Activated CD8-positive, alpha-beta memory T cell treated with anti-CD3 and anti-CD28 coated beads, Interleukin-2, amount 10 ng/mL, durations not matched to agents 7 days and 5 days (primary cell): ENCODE measurements at regions of chr9 and their contacts with region 1.

Region 1: GRCh38 chr9:137423004-137423874 is at the starts of genes EXD3 and NOXA1:
- DNase-seq: peak; percentile 96
- ATAC-seq: peak; percentile 96
- H3K4me3 Mint-ChIP-seq: peak within 1 kb of the TSS; percentile 87
- H3K27ac Mint-ChIP-seq: peak within 1 kb of the TSS; percentile 73
- H3K4me1 Mint-ChIP-seq: peaks cover 13% of the 10 kb centered on the region
- H3K27me3 Mint-ChIP-seq: peaks cover 11% of the 10 kb centered on the region
- total RNA-seq, gene EXD3: 9.2 to 19.8 TPM
- total RNA-seq, gene NOXA1: 0.30 to 0.53 TPM

Region 2: DNA sequence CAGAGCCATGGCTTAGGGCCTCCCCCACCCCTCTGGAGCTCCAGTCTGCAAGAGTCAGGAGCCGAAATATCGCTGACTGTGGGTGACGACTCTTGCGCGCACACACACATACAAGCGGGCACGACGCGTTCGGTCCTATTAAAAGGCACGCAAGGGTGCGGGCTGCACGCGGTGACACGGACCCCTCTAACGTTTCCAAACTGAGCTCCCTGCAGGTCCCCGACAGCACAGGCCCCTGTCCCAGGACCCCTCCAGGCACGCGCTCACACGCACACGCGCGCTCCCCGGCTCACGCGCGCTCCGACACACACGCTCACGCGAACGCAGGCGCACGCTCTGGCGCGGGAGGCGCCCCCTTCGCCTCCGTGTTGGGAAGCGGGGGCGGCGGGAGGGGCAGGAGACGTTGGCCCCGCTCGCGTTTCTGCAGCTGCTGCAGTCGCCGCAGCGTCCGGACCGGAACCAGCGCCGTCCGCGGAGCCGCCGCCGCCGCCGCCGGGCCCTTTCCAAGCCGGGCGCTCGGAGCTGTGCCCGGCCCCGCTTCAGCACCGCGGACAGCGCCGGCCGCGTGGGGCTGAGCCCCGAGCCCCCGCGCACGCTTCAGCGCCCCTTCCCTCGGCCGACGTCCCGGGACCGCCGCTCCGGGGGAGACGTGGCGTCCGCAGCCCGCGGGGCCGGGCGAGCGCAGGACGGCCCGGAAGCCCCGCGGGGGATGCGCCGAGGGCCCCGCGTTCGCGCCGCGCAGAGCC is 284.3 kb before region 1 on chr9 and contains the start of gene GRIN1:
- CTCF ChIA-PET with region 1: no interaction called
- DNase-seq: no peak
- ATAC-seq: peak; percentile 73
- H3K4me3 Mint-ChIP-seq: no peak within 1 kb of the TSS
- H3K27ac Mint-ChIP-seq: no peak within 1 kb of the TSS
- H3K4me1 Mint-ChIP-seq: peaks cover 4% of the 10 kb centered on the region
- H3K27me3 Mint-ChIP-seq: peaks cover 63% of the 10 kb centered on the region
- total RNA-seq, gene GRIN1: not detected

Region 3: DNA sequence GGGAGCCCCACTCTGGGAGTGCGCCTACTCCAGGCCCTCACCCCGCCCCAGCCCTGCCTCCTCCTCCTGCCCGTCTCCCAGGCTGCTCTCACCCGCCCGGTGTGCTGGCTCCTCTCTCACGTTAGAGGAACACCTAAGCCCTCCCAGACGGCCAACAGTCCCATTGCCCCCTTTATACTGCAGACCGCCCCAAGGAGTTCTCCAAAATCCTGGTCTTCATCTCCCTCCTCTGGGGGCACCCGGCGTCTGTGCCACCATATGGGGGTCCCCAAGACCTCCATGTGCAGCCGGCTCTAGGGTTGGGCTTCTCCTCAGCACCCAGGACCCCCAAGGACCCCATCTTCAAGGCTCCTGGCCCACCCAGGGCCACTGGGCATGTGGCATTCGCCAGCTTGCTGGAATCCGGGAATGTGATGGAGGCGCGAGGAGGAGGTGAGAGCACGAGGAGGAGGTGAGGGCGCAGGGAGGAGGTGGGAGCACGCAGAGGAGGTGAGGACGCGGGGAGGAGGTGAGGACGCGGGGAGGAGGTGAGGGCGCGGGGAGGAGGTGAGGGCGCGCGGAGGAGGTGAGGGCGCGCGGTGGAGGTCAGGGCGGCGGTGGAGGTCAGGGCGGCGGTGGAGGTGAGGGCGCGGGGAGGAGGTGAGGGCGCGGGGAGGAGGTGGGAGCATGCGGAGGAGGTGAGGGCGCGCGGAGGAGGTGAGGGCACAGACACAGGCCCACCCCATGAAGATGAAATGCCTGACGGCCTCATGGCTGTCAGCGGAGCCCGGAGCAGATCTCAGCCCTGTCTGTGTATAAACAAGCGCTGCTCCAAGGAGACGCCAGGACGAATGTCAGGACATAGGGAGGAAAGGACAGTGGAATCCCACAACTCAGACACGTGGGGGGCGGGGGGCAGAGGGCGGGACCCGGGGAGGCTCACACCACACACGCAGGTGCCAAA is 41.5 kb before region 1 on chr9:
- CTCF ChIA-PET with region 1: no interaction called
- DNase-seq: no peak
- ATAC-seq: no peak
- H3K4me3 Mint-ChIP-seq: no peak overlapping the region
- H3K27ac Mint-ChIP-seq: no peak overlapping the region
- H3K4me1 Mint-ChIP-seq: no peaks in the 10 kb centered on the region
- H3K27me3 Mint-ChIP-seq: no peaks in the 10 kb centered on the region

Region 4: DNA sequence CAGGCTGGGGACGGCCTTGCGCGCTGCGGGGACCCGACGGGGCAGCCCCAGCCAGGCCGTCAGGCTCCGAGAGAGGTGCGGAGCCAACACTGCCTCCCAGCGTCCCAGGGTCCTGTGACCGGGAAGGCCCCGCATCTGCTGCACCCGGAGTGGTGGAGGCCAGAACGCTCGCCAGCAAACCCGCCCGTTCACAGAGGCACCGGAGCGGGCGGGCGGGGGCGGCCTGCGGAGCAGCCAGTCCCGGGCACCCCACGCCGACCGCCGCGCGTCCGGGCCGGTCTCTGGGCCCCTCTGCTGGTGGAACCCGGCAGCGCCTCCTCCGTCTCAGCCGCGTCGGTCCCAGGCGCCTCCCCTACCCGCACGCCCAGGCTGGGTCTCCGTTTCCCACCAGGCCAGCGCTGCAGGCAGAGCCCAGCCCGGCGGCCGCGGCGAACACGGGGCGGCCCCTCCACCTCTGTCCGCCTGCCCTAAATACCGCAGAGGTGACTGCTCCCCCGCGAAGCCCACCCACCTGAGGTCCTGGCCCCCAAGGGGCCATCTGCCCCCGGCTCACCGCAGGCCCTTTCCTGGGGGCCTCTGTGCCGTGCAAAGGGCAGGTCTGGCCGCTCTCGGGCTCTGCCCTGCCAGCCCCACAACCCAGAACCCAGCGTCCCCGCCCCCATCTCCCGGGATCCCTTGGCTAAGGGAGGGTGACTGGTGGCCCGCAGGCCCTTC is 16.2 kb before region 1 on chr9:
- CTCF ChIA-PET with region 1: interaction called, 12 read pairs
- DNase-seq: peak; percentile 71
- ATAC-seq: peak; percentile 92
- H3K4me3 Mint-ChIP-seq: no peak overlapping the region
- H3K27ac Mint-ChIP-seq: no peak overlapping the region
- H3K4me1 Mint-ChIP-seq: peaks cover 11% of the 10 kb centered on the region
- H3K27me3 Mint-ChIP-seq: peaks cover 8% of the 10 kb centered on the region

Region 5: GRCh38 chr9:137434498-137435380 is 11.5 kb after region 1 on chr9:
- CTCF ChIA-PET with region 1: interaction called, 20 read pairs
- DNase-seq: no peak
- ATAC-seq: peak; percentile 16
- H3K4me3 Mint-ChIP-seq: no peak overlapping the region
- H3K27ac Mint-ChIP-seq: no peak overlapping the region
- H3K4me1 Mint-ChIP-seq: peaks cover 4% of the 10 kb centered on the region
- H3K27me3 Mint-ChIP-seq: no peaks in the 10 kb centered on the region

Region 6: GRCh38 chr9:137445275-137445807 is 22.1 kb after region 1 on chr9:
- CTCF ChIA-PET with region 1: interaction called, 59 read pairs
- DNase-seq: peak; percentile 93
- ATAC-seq: peak; percentile 89
- H3K4me3 Mint-ChIP-seq: no peak overlapping the region
- H3K27ac Mint-ChIP-seq: no peak overlapping the region
- H3K4me1 Mint-ChIP-seq: peaks cover 23% of the 10 kb centered on the region
- H3K27me3 Mint-ChIP-seq: peaks cover 28% of the 10 kb centered on the region

Region 7: GRCh38 chr9:137522746-137523455 is 99.7 kb after region 1 on chr9:
- CTCF ChIA-PET with region 1: interaction called, 20 read pairs
- DNase-seq: no peak
- ATAC-seq: no peak
- H3K4me3 Mint-ChIP-seq: no peak overlapping the region
- H3K27ac Mint-ChIP-seq: no peak overlapping the region
- H3K4me1 Mint-ChIP-seq: peaks cover 2% of the 10 kb centered on the region
- H3K27me3 Mint-ChIP-seq: peaks cover 8% of the 10 kb centered on the region